ENCODE measurements at regions of chr2 and their contacts with region 1.

Region 1: GRCh38 chr2:75466708-75467311 is 93.9 kb downstream of the EVA1A start:
- DNase-seq: no peak
- ATAC-seq: no peak
- H3K4me3 ChIP-seq: no peak overlapping the region
- H3K27ac ChIP-seq: no peak overlapping the region
- H3K4me1 ChIP-seq: no peaks in the 10 kb centered on the region
- H3K27me3 ChIP-seq: peaks cover 0 to 21% (median 5%) of the 10 kb centered on the region in 7 donors
- CTCF ChIP-seq: peak in 6 of 9 donors; percentile 12 to 36 (median 20)

Region 2: DNA sequence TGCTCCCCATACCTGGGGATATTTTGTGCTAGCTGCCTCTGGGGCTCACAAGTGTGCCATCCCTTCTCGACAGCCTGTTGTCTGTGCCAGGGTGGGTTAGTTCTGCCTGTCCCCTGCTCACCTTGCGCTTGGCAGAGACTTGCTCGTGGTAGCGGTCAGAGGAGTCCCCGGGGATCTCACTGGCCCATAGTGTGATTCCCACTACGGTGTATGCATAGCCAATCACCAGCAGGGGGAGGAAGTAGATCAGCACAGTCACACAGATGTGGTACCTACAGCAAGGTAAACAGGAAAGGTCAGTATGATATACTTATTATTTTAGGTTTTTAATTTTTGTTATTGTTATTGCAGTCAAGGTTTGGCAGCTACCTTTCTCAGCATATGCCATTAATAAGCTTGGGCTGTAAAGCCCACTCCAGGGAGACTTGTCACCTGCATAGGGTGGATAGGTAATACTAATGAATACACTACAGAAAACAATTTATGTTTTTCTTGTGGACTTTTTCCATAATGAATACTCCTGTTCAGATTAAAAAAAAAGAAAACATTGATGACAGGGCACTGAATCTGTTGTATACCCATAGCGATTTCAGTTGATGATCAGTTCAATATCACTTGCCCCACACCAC is 413.2 kb before region 1 on chr2:
- intact Hi-C with region 1: loop called in 1 of 10 experiments (anchors 5 kb)
- DNase-seq: no peak
- ATAC-seq: peak in 1 of 8 donors; percentile 63
- H3K4me3 ChIP-seq: no peak overlapping the region
- H3K27ac ChIP-seq: no peak overlapping the region
- H3K4me1 ChIP-seq: peaks cover 0 to 18% (median 0%) of the 10 kb centered on the region in 9 donors
- H3K27me3 ChIP-seq: no peaks in the 10 kb centered on the region
- CTCF ChIP-seq: peak in 7 of 9 donors; percentile 41 to 57 (median 44)

Region 3: DNA sequence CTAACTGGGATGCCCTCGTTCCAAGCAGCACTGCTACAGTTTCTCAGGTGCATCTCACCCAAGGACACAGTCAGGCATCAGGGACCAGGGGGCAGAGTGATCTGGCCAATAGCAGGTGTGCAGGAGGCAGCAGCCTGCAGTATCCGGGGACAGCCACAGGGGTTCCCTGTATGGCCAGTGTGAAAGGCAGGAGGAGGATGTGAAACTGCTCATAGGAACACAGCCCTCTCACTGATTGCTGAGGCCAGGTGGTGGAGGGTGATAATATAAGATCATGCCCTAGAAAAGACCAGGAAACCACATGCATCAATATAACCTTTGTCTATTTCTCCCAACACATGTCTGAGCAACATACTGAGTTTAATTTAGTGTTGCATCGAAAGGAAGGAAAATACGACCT is 154.8 kb before region 1 on chr2:
- intact Hi-C with region 1: no loop called
- DNase-seq: no peak
- ATAC-seq: no peak
- H3K4me3 ChIP-seq: no peak overlapping the region
- H3K27ac ChIP-seq: no peak overlapping the region
- H3K4me1 ChIP-seq: no peaks in the 10 kb centered on the region
- H3K27me3 ChIP-seq: no peaks in the 10 kb centered on the region
- CTCF ChIP-seq: no peak

Region 4: DNA sequence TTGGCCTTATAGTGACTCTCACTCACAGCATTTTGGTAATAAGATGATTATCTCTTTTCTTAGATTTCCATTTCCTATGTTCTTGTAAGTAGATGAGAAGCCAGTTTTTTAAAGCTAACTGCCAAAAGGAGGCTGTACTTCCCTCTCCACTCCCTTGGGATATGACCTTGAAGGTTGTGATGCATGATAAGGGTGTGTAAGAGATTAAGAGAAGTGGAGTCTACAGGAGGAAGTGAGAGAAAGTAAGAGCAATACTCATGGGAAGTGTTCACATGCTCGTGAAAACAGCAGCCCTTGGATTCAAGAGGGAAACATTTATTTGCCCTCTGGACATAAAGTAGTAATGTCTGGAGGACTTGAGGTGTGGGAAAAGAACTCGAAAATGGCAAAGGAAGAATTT is 77.5 kb before region 1 on chr2:
- intact Hi-C with region 1: no loop called
- DNase-seq: no peak
- ATAC-seq: no peak
- H3K4me3 ChIP-seq: no peak overlapping the region
- H3K27ac ChIP-seq: no peak overlapping the region
- H3K4me1 ChIP-seq: no peaks in the 10 kb centered on the region
- H3K27me3 ChIP-seq: peaks cover 0 to 4% (median 0%) of the 10 kb centered on the region in 7 donors
- CTCF ChIP-seq: no peak

Region 5: GRCh38 chr2:75602724-75603342 is 136.0 kb after region 1 on chr2:
- intact Hi-C with region 1: loop called in 8 of 10 experiments (anchors 2 to 5 kb)
- DNase-seq: no peak
- ATAC-seq: no peak
- H3K4me3 ChIP-seq: no peak overlapping the region
- H3K27ac ChIP-seq: no peak overlapping the region
- H3K4me1 ChIP-seq: no peaks in the 10 kb centered on the region
- H3K27me3 ChIP-seq: peaks cover 0 to 28% (median 9%) of the 10 kb centered on the region in 7 donors
- CTCF ChIP-seq: no peak

Region 6: DNA sequence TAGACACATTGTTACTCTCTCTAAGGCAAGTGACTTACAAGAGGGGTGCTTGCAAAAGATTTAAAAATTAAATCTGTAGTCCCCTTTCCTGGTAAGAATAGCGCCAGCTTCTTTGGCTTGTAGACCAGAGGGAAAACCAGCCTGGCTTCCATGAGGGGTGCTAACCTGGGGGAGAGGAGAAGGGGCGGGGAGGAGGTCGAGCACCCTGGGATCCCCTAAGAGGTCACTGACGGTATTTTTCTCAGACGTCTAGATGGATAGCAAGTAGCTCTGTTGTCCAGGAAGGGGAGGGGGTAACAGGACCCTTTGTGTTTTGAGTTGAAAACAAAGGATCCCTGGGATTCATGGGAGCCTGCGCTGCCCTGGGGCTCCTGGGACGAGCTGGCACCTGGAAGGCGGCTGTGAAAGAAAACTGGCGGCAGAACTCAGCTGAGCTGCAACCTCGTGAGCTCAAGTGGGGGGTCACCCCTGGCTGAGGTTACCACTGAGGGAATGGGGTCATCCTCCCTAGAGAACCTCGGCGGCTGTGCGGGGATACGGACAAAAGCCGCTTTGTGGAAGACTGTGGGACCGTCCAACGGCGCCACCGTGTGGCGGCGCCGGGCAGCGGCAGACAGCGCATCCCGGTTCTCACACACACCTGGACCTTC is 142.0 kb after region 1 on chr2:
- intact Hi-C with region 1: loop called in 9 of 10 experiments (anchors 1 to 5 kb)
- DNase-seq: peak; percentile 35 to 55
- ATAC-seq: peak; percentile 70 to 90 (median 82)
- H3K4me3 ChIP-seq: peak overlapping the region in 6 of 10 donors; percentile 12 to 40 (median 20)
- H3K27ac ChIP-seq: no peak overlapping the region
- H3K4me1 ChIP-seq: peaks cover 0 to 9% (median 4%) of the 10 kb centered on the region in 9 donors
- H3K27me3 ChIP-seq: peaks cover 0 to 62% (median 29%) of the 10 kb centered on the region in 7 donors
- CTCF ChIP-seq: peak; percentile 83 to 97 (median 94)

Region 7: DNA sequence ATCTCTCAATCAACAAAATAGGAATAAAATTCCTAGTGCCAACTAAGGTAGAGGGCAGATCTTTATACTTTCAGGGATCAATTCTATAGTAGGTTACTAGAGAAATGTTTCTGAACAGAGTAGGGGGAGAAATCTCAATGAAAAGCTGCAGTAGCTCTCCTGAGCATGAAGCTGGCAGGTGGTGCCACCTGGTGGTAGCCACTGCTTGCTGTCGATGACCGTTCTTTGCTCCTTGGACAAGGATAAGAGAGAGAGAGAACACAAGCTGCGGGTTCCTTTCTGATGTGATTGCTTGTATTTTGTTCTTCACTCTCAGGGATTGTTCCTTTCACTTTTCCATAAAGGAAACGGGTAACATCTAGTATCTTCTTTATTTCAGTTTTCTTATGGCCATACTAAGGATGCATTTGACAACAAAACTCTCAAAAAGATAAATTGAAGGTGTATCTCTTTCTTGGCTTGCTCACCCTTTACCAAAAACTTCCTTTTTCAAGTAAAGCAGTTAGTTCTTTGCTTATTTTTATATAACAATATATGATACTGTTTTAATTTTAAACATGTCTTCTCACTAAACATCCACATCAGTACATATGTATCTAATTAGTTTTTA is 161.2 kb after region 1 on chr2:
- intact Hi-C with region 1: loop called in 5 of 10 experiments (anchors 5 kb)
- DNase-seq: peak; percentile 56 to 62
- ATAC-seq: peak in 4 of 8 donors; percentile 65 to 80 (median 71)
- H3K4me3 ChIP-seq: no peak overlapping the region
- H3K27ac ChIP-seq: no peak overlapping the region
- H3K4me1 ChIP-seq: peaks cover 0 to 14% (median 0%) of the 10 kb centered on the region in 9 donors
- H3K27me3 ChIP-seq: peaks cover 0 to 15% (median 0%) of the 10 kb centered on the region in 7 donors
- CTCF ChIP-seq: peak; percentile 65 to 94 (median 92)

Measured in heart right ventricle (tissue), 16 donors.